ENCODE measurements at regions of chr6 and their contacts with region 1.

Region 1: DNA sequence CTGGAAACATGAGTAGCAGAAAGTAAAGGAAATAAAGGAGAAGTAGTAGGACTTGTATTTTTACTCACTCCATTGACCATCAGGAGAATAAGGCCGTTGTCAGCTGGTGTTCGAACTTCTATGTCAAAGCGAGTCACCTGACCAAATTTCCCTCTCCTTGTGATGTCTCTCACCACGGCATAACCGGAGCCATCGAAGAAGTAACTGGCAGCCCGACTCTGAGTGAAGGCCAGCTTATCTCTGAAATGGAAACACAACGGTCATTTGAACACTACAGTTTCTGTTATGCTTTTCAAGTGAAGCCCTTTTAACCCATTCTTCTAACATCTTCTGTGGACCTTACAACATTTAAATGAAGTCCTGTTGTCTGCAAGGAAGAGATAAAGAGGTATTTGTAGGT is 51.7 kb downstream of the FAM229B start:
- DNase-seq: no peak
- ATAC-seq: no peak

Region 2: GRCh38 chr6:111195656-111196055 is 943.4 kb before region 1 on chr6:
- intact Hi-C with region 1: no loop called
- DNase-seq: no peak
- ATAC-seq: no peak

Region 3: DNA sequence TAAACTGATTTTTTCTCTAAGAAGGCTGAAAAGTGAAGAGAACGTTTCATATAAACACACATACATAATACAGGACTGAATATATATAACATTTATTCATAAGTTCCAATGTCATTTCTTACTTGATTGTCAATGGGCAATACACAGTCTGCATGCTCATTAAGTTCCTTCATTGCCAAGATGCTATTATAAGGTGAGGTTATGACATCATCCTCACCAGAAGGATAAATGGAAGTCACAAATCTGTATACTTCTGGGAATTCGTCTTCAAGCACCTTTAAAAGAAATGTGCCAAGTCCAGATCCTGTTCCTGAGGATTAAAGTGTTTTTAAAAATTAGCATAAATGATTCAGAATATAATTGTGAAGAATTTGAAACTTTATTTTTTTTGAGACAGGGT is 62.9 kb before region 1 on chr6:
- intact Hi-C with region 1: loop called (anchors 10 kb)
- DNase-seq: no peak
- ATAC-seq: no peak

Measured in Right ventricle myocardium superior (tissue), 1 donor.